ENCODE measurements at regions of chr1 and their contacts with region 1.

Region 1: DNA sequence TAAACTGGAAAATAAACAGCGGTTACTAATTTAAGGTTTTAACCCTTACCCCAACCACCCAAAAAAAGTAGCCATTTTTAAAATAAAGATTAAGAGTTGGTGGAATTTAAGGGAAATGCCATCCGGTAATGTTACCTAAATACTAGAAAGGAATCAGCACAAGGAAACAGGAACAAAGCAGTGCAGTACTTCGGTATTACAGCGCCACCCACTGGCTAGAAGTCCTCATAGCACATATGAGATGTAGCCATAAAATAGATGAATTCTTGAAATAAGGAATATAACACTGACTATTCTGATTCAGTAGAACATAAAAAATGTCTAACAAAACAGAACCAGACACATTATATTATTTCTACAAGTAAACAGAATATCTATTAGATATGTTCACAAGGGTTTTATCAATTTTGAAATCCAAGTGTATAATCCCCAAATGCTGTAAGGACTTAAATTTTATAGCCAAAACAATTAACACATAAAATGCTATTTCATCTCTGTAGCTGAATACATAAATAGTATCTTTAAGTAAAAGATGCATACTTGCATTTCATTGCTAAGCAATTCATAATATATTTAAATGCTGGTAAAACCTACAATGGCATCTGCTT is 58.8 kb downstream of the FRRS1 start:
- DNase-seq: peak; percentile 69 to 78
- H3K4me3 ChIP-seq: no peak overlapping the region
- H3K27ac ChIP-seq: no peak overlapping the region
- H3K4me1 ChIP-seq: no peaks in the 10 kb centered on the region
- H3K27me3 ChIP-seq: no peaks in the 10 kb centered on the region
- CTCF ChIP-seq: peak; percentile 65 to 71

Region 2: DNA sequence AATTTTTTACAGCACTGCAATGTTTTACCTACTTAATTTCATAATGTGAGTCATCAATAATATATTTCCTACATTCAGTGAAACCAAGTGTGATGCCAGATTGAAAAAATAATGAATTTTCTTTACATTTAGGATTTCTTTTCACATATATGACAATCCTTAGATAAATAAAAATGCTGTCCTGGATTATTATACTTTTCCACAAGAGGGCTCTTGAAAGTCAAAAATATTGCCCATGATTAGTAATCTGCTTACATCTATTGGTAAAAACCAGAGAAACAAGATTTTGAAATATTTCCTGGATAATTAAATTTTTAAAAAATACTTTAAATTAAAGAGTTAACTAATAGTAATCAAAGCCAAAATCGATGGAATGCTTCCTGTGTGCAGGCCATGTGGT is 530.2 kb before region 1 on chr1:
- intact Hi-C with region 1: loop called (anchors 5 kb)
- DNase-seq: no peak
- H3K4me3 ChIP-seq: no peak overlapping the region
- H3K27ac ChIP-seq: no peak overlapping the region
- H3K4me1 ChIP-seq: no peaks in the 10 kb centered on the region
- H3K27me3 ChIP-seq: no peaks in the 10 kb centered on the region
- CTCF ChIP-seq: no peak

Measured in tibial artery (tissue), 4 donors.